ENCODE measurements at regions of chr12 and their contacts with region 1.

Region 1: DNA sequence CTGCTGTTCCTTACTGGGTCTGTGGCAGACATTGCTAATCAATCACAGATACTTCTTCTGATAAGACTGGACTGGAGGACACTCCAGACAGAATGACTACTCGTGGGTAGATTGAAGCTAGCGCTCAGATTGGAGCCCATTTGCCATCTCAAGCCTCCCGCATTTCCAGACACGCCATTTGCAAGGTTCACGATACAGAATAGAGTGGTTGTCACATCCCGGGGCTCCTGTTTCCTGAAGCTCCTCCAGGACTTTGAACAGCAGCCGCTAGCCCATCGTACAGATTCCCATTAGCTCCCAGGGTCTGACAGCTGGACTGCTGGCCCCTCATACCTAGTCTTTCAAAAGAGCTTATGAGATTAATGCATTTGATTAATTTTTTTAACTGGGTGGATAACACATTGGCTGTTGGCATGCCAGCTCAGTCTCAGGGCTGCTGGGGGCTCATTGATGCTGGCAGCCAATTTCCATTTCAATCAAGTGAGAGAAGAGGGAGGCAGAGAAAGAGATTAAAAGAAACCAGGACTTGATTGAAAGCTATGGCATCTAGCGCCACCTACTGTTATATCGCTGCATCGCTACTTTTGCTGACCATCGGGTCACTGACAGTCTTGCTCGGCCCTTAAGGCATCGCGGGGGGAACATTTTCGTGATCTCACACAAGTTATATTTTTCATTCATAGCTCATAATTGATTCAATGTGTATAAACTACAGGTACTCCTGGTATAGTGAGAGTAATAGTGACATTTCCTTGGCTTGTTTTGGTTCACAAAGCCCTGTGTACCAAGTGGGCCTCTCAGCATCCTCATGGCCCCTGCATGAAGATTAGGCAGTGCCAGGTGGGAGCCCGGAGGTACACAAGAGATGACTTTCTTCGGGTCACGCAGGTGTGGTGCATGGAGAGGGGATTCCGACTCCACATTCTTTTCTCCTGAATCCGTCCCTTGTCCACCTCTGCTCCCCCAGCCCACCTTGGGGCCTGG is 78.6 kb downstream of the CCDC60 start:
- DNase-seq: peak; percentile 12
- H3K4me3 ChIP-seq: no peak overlapping the region
- CTCF ChIP-seq: peak; percentile 74

Region 2: GRCh38 chr12:118271790-118272417 is 1141.2 kb before region 1 on chr12:
- CTCF ChIA-PET with region 1: no interaction called
- POLR2A ChIA-PET with region 1: no interaction called
- DNase-seq: no peak
- H3K4me3 ChIP-seq: no peak overlapping the region
- CTCF ChIP-seq: no peak

Region 3: GRCh38 chr12:118377884-118378470 is 1035.1 kb before region 1 on chr12:
- CTCF ChIA-PET with region 1: interaction called, 11 read pairs
- POLR2A ChIA-PET with region 1: no interaction called
- DNase-seq: no peak
- H3K4me3 ChIP-seq: peak overlapping the region; percentile 87
- CTCF ChIP-seq: peak; percentile 75

Region 4: DNA sequence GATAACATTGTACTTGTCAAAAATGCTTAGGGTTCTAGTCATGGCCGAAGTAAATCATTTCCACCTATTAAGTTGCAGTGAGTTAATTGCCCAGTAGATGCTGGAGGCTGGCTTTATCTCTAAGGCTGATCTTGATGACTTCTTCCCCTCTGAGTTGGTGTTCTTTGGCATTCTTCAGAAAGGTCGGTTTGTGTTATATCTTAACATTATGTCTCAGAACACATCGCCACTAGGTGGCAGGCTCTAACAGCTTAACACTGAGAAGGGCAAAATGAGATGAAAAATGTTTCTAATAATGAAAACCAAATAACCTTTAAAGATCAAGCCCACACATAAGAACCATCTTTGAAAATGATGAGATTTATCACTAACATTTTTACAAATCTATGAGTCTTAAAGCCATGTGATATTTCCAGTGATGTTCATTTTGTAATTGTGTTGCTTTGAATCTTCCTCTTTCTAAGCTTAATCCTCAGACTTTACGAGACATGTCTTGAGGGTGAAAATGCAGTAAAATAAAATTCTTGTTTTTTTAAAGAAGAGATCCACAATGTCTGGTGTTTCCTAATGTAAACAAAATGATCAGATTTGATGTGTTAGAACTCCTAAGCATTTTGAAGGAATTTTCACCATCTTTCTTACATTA is 1008.1 kb before region 1 on chr12:
- CTCF ChIA-PET with region 1: interaction called, 34 read pairs
- POLR2A ChIA-PET with region 1: no interaction called
- DNase-seq: peak; percentile 23
- H3K4me3 ChIP-seq: no peak overlapping the region
- CTCF ChIP-seq: peak; percentile 58

Region 5: DNA sequence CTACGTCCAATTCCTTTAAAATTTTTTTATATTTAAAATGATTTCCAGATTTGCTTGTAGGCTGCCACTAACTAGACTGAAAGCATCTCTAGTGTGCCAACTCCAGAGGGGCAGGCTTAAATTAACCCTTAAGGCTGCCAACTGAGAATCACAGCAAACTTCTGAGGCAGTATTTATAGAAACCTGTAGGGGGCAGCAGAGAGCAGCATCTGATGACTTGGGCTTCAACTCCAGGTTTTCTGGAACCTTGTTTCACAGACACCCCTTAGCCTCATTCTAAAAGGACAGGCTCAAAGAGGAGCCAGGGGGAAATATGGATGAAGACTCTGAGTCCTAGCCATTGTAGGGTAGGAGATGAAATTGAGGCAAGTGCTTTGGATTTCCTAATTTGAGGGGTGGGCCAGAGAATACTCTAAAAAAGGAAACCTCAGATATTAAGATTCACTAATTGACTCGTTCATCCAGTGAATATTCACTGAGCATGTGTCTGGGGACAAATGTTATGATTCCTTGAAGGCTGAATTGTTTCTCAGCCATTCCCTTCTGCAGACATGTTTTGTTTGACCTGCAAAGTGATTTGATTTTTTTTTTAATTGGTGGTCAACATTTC is 297.7 kb before region 1 on chr12:
- CTCF ChIA-PET with region 1: interaction called, 40 read pairs
- POLR2A ChIA-PET with region 1: no interaction called
- DNase-seq: no peak
- H3K4me3 ChIP-seq: no peak overlapping the region
- CTCF ChIP-seq: peak; percentile 73

Region 6: GRCh38 chr12:119399301-119399700 is 13.8 kb before region 1 on chr12:
- CTCF ChIA-PET with region 1: interaction called, 12 read pairs
- POLR2A ChIA-PET with region 1: no interaction called
- DNase-seq: no peak
- H3K4me3 ChIP-seq: no peak overlapping the region
- CTCF ChIP-seq: no peak

Region 7: DNA sequence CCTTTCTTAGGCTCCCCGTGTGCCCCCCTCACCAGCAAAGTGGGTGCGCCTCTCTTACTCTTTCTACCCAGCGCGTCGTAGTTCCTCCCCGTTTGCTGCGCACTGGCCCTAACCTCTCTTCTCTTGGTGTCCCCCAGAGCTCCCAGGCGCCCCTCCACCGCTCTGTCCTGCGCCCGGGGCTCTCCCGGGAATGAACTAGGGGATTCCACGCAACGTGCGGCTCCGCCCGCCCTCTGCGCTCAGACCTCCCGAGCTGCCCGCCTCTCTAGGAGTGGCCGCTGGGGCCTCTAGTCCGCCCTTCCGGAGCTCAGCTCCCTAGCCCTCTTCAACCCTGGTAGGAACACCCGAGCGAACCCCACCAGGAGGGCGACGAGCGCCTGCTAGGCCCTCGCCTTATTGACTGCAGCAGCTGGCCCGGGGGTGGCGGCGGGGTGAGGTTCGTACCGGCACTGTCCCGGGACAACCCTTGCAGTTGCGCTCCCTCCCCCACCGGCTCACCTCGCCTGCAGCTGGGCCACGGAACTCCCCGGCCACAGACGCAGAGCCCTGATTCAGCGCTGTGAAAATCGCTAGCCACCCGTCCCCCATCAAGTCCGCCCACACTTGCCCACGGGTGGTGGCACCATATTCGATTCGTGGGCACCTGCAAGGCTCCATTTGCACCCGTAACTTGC is 181.8 kb after region 1 on chr12:
- CTCF ChIA-PET with region 1: no interaction called
- POLR2A ChIA-PET with region 1: no interaction called
- DNase-seq: no peak
- H3K4me3 ChIP-seq: no peak overlapping the region
- CTCF ChIP-seq: no peak